Adrenal gland (tissue), 19 donors: ENCODE measurements at regions of chr2 and their contacts with region 1.

Region 1: GRCh38 chr2:62705007-62705829 is at the start of gene EHBP1:
- DNase-seq: peak; percentile 99 to 100 (median 99)
- H3K4me3 ChIP-seq: peak within 1 kb of the TSS in 3 of 4 donors; percentile 75 to 100 (median 84)
- H3K27ac ChIP-seq: peak within 1 kb of the TSS; percentile 67 to 95 (median 90)
- H3K4me1 ChIP-seq: peaks cover 18 to 42% of the 10 kb centered on the region in 2 donors
- H3K27me3 ChIP-seq: no peaks in the 10 kb centered on the region
- CTCF ChIP-seq: peak in 1 of 6 experiments; percentile 15
- POLR2A ChIP-seq: peak; percentile 94 to 98
- total RNA-seq, gene EHBP1: 26.8 to 83.6 (median 46.3) TPM

Region 2: DNA sequence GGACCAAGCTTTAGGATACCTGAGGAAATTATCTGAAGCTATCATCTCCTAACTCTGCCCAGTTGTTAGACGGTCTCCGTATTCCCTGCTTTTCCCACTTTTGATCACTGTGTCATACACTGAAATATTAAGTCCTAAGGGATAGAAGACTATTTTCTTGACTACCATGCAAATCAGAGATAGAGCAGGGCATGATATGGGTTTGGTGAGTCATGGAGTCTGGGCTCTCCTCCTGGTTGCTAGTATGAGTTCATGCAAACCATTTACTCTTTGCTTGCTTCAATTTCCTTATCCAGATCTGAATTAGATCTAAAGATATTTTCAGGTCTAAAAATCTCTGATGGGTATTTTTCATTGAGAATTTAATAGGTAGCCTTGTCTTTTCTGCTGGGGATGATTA is 55.3 kb after region 1 on chr2:
- intact Hi-C with region 1: loop called in 1 of 2 experiments (anchors 10 kb)
- DNase-seq: peak in 3 of 7 donors; percentile 20 to 39 (median 27)
- H3K4me3 ChIP-seq: no peak overlapping the region
- H3K27ac ChIP-seq: no peak overlapping the region
- H3K4me1 ChIP-seq: peaks cover 0 to 28% of the 10 kb centered on the region in 2 donors
- H3K27me3 ChIP-seq: no peaks in the 10 kb centered on the region
- CTCF ChIP-seq: no peak
- POLR2A ChIP-seq: no peak